A673 (cell line): ENCODE measurements at regions of chr7 and their contacts with region 1.

Region 1: GRCh38 chr7:21507626-21508343 is 35.1 kb upstream of the DNAH11 start:
- DNase-seq: peak; percentile 65
- H3K4me3 ChIP-seq: no peak overlapping the region
- H3K27ac ChIP-seq: no peak overlapping the region
- H3K4me1 ChIP-seq: no peaks in the 10 kb centered on the region
- H3K27me3 ChIP-seq: no peaks in the 10 kb centered on the region
- CTCF ChIP-seq: peak; percentile 71

Region 2: GRCh38 chr7:20241194-20241910 is 1266.4 kb before region 1 on chr7:
- CTCF ChIA-PET with region 1: no interaction called
- POLR2A ChIA-PET with region 1: no interaction called
- intact Hi-C with region 1: no loop called
- DNase-seq: peak; percentile 64
- H3K4me3 ChIP-seq: no peak overlapping the region
- H3K27ac ChIP-seq: no peak overlapping the region
- H3K4me1 ChIP-seq: peaks cover 11% of the 10 kb centered on the region
- H3K27me3 ChIP-seq: no peaks in the 10 kb centered on the region
- CTCF ChIP-seq: no peak

Region 3: GRCh38 chr7:20778063-20778721 is 729.6 kb before region 1 on chr7:
- CTCF ChIA-PET with region 1: no interaction called
- POLR2A ChIA-PET with region 1: no interaction called
- intact Hi-C with region 1: loop called (anchors 5 kb)
- DNase-seq: peak; percentile 56
- H3K4me3 ChIP-seq: peak overlapping the region; percentile 37
- H3K27ac ChIP-seq: no peak overlapping the region
- H3K4me1 ChIP-seq: peaks cover 6% of the 10 kb centered on the region
- H3K27me3 ChIP-seq: peaks cover 98% of the 10 kb centered on the region
- CTCF ChIP-seq: peak; percentile 69

Region 4: GRCh38 chr7:21253740-21254687 is 253.8 kb before region 1 on chr7:
- CTCF ChIA-PET with region 1: no interaction called
- POLR2A ChIA-PET with region 1: no interaction called
- intact Hi-C with region 1: loop called (anchors 1 kb)
- DNase-seq: peak; percentile 76
- H3K4me3 ChIP-seq: no peak overlapping the region
- H3K27ac ChIP-seq: no peak overlapping the region
- H3K4me1 ChIP-seq: no peaks in the 10 kb centered on the region
- H3K27me3 ChIP-seq: peaks cover 87% of the 10 kb centered on the region
- CTCF ChIP-seq: peak; percentile 74

Region 5: DNA sequence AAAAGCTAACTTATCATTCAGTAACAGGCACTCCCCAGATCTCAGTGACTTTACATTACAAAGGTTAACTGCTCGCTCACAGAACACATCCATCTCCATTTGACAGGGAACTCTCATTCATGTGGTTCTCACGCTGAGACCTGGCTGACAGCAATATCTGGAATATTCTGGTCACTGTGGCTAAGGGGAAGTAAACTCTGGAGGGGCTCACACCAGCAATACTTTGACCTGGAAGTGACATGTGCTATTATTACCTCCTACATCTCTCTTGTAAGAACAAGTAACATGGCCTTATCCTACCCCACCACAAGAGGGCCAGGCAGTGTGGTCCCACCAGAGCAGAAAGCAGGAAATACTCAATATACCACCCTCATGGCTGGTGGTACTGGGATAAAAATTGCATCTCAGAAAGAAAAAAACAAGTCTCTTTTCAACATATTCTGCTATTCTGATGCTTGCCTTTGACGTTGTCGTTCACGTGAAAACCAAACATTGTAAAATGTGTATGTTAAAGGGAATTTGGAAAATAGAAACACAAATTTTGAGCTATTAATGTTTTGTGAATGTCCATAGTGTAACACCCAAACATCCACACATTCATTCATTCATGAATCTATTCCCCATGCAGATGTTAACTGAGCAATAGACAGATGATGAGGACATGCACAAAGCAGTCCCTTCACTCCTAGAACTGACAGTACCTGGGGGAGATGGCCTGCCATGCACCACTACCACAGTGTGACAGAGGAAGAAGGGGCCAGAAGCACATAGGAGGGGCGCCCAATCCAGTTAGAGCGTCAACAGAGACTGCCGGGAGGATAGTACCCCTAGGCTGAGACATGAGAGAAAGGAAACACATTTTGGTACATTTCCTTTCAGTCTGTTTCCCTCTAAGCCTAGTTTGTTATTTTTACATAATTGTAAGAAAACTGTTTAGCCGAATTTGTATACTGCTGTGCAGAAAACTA is 245.9 kb before region 1 on chr7:
- CTCF ChIA-PET with region 1: no interaction called
- POLR2A ChIA-PET with region 1: no interaction called
- intact Hi-C with region 1: loop called (anchors 1 kb)
- DNase-seq: peak; percentile 58
- H3K4me3 ChIP-seq: no peak overlapping the region
- H3K27ac ChIP-seq: no peak overlapping the region
- H3K4me1 ChIP-seq: no peaks in the 10 kb centered on the region
- H3K27me3 ChIP-seq: peaks cover 56% of the 10 kb centered on the region
- CTCF ChIP-seq: peak; percentile 66

Region 6: DNA sequence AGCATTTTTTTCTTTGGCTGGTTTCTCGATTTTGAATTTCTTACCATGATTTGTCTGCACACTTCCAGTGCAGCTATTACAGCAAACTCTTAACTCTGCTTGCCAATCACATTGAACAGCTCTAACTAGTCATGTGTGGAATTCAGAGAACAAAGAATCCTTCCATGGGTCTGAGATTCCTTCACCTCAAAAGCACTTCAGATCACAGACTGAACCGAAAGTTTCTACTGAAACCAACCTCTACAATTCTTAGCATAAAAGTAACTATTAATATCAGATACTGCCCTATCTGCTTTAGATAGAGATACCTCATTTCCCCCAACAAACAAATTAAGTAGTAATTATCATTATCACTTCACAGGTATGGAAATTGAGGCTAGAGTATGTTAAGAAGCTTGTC is 136.4 kb before region 1 on chr7:
- CTCF ChIA-PET with region 1: no interaction called
- POLR2A ChIA-PET with region 1: no interaction called
- intact Hi-C with region 1: no loop called
- DNase-seq: no peak
- H3K4me3 ChIP-seq: no peak overlapping the region
- H3K27ac ChIP-seq: no peak overlapping the region
- H3K4me1 ChIP-seq: no peaks in the 10 kb centered on the region
- H3K27me3 ChIP-seq: peaks cover 11% of the 10 kb centered on the region
- CTCF ChIP-seq: no peak